Activated B cell treated with CpG ODN at 0.5 μM for 24 hours (primary cell): ENCODE measurements at regions of chr1 and their contacts with region 1.

Region 1: DNA sequence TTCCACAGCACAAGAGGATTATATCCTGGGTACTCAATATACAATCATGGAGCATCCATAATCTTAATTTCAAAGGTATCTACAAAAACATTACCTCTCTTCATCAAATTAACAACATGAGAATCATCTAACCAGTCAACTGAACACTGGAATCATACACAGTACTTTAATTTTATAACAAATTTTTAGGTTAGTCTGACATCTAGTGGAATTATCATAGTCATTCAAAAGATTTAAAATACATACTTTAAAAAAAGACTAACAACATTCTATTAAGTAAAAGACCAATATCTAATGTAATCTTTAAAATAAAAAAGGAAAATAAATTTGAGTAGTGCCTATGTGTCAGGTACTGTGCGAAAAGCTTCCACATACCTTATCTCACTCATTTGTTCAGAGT is 16.8 kb upstream of the SH3GLB1 start:
- DNase-seq: no peak
- ATAC-seq: peak; percentile 34
- H3K4me3 Mint-ChIP-seq: no peak overlapping the region
- H3K27ac Mint-ChIP-seq: no peak overlapping the region
- H3K4me1 Mint-ChIP-seq: no peaks in the 10 kb centered on the region
- H3K27me3 Mint-ChIP-seq: no peaks in the 10 kb centered on the region
- CTCF ChIP-seq: no peak

Region 2: GRCh38 chr1:86419277-86419903 is 268.2 kb before region 1 on chr1:
- CTCF ChIA-PET with region 1: no interaction called
- POLR2A ChIA-PET with region 1: no interaction called
- intact Hi-C with region 1: loop called (anchors 5 kb)
- DNase-seq: no peak
- ATAC-seq: peak; percentile 81
- H3K4me3 Mint-ChIP-seq: peak overlapping the region; percentile 80
- H3K27ac Mint-ChIP-seq: peak overlapping the region; percentile 70
- H3K4me1 Mint-ChIP-seq: peaks cover 7% of the 10 kb centered on the region
- H3K27me3 Mint-ChIP-seq: peaks cover 3% of the 10 kb centered on the region
- CTCF ChIP-seq: no peak

Region 3: DNA sequence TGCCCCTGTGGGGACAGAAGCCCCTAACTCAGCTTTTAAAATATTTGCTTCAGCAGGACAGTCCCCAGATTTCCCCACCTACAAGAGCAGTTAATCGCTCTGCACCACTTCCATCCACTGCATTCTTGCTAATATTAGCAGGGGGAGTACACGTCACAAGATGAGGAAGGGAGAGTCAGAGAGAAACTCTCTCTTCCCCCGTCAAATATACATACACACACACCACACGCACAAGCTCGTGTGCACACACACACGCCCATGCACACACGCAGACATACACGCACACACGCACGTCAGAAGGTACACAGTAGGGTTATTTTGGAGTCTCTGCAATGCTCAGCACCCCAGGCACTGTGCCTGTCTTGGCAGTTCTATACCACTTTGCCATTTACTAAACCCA is 216.7 kb before region 1 on chr1:
- CTCF ChIA-PET with region 1: interaction called, 26 read pairs
- POLR2A ChIA-PET with region 1: no interaction called
- intact Hi-C with region 1: loop called (anchors 5 kb)
- DNase-seq: no peak
- ATAC-seq: peak; percentile 56
- H3K4me3 Mint-ChIP-seq: no peak overlapping the region
- H3K27ac Mint-ChIP-seq: peak overlapping the region; percentile 6
- H3K4me1 Mint-ChIP-seq: peaks cover 6% of the 10 kb centered on the region
- H3K27me3 Mint-ChIP-seq: peaks cover 18% of the 10 kb centered on the region
- CTCF ChIP-seq: no peak

Region 4: GRCh38 chr1:86515597-86515996 is 172.0 kb before region 1 on chr1:
- CTCF ChIA-PET with region 1: interaction called, 3 read pairs
- POLR2A ChIA-PET with region 1: no interaction called
- intact Hi-C with region 1: loop called (anchors 5 kb)
- DNase-seq: no peak
- ATAC-seq: peak; percentile 58
- H3K4me3 Mint-ChIP-seq: no peak overlapping the region
- H3K27ac Mint-ChIP-seq: no peak overlapping the region
- H3K4me1 Mint-ChIP-seq: no peaks in the 10 kb centered on the region
- H3K27me3 Mint-ChIP-seq: no peaks in the 10 kb centered on the region
- CTCF ChIP-seq: no peak